PC-3 (cell line): ENCODE measurements at regions of chr5 and their contacts with region 1.

Region 1: GRCh38 chr5:177146891-177147638 is 13.5 kb downstream of the NSD1 start:
- DNase-seq: peak; percentile 44
- ATAC-seq: peak; percentile 75
- H3K4me3 ChIP-seq: no peak overlapping the region
- H3K27ac ChIP-seq: no peak overlapping the region
- H3K4me1 ChIP-seq: peaks cover 6% of the 10 kb centered on the region; the same call in 1 of the 2 replicates
- H3K27me3 ChIP-seq: no peaks in the 10 kb centered on the region
- CTCF ChIP-seq: no peak

Region 2: DNA sequence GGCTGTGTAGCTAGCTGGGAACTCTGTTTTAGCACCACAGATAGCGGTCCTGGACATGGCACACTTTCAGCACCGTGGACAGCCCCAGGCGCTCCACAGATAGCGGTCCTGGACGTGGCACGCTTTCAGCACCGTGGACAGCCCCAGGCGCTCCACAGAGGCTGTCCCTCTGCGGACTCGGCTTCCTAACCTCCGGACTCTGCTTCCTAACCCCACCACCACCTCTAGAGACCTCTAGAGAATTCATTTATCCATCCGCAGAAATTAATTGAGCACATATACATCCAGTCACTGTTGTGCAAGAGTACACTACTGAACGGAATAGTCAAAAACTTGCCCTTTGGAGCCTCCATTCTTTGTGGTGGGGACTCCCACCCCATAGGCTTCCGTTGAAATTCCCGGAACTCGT is 309.4 kb before region 1 on chr5:
- CTCF ChIA-PET with region 1: no interaction called
- POLR2A ChIA-PET with region 1: interaction called, 21 read pairs
- intact Hi-C with region 1: no loop called
- DNase-seq: peak; percentile 88
- ATAC-seq: peak; percentile 98
- H3K4me3 ChIP-seq: no peak overlapping the region
- H3K27ac ChIP-seq: no peak overlapping the region
- H3K4me1 ChIP-seq: no peaks in the 10 kb centered on the region
- H3K27me3 ChIP-seq: peaks cover 51% of the 10 kb centered on the region
- CTCF ChIP-seq: no peak

Region 3: GRCh38 chr5:177094224-177095087 is 52.6 kb before region 1 on chr5:
- CTCF ChIA-PET with region 1: no interaction called
- POLR2A ChIA-PET with region 1: no interaction called
- intact Hi-C with region 1: no loop called
- DNase-seq: no peak
- ATAC-seq: no peak
- H3K4me3 ChIP-seq: no peak overlapping the region
- H3K27ac ChIP-seq: no peak overlapping the region
- H3K4me1 ChIP-seq: no peaks in the 10 kb centered on the region
- H3K27me3 ChIP-seq: no peaks in the 10 kb centered on the region
- CTCF ChIP-seq: no peak

Region 4: GRCh38 chr5:177249761-177250526 is 102.9 kb after region 1 on chr5:
- CTCF ChIA-PET with region 1: no interaction called
- POLR2A ChIA-PET with region 1: no interaction called
- intact Hi-C with region 1: loop called (anchors 5 kb)
- DNase-seq: peak; percentile 47
- ATAC-seq: peak; percentile 72
- H3K4me3 ChIP-seq: no peak overlapping the region
- H3K27ac ChIP-seq: no peak overlapping the region
- H3K4me1 ChIP-seq: peaks cover 12% of the 10 kb centered on the region; the same call in 1 of the 2 replicates
- H3K27me3 ChIP-seq: no peaks in the 10 kb centered on the region
- CTCF ChIP-seq: no peak